Naive thymus-derived CD4-positive, alpha-beta T cell (primary cell): ENCODE measurements at regions of chr10 and their contacts with region 1.

Region 1: GRCh38 chr10:102615361-102615760 is 28.9 kb upstream of the TRIM8 start:
- DNase-seq: no peak
- ATAC-seq: no peak
- H3K4me3 ChIP-seq: no peak overlapping the region
- H3K4me3 Mint-ChIP-seq: no peak overlapping the region
- H3K27ac ChIP-seq: no peak overlapping the region
- H3K27ac Mint-ChIP-seq: peak overlapping the region in 6 of 9 donors; percentile 29 to 84 (median 53)
- H3K4me1 ChIP-seq: peaks cover 0 to 35% of the 10 kb centered on the region in 2 donors
- H3K4me1 Mint-ChIP-seq: peaks cover 7 to 36% (median 32%) of the 10 kb centered on the region in 7 donors
- H3K27me3 ChIP-seq: no peaks in the 10 kb centered on the region
- H3K27me3 Mint-ChIP-seq: no peaks in the 10 kb centered on the region

Region 2: DNA sequence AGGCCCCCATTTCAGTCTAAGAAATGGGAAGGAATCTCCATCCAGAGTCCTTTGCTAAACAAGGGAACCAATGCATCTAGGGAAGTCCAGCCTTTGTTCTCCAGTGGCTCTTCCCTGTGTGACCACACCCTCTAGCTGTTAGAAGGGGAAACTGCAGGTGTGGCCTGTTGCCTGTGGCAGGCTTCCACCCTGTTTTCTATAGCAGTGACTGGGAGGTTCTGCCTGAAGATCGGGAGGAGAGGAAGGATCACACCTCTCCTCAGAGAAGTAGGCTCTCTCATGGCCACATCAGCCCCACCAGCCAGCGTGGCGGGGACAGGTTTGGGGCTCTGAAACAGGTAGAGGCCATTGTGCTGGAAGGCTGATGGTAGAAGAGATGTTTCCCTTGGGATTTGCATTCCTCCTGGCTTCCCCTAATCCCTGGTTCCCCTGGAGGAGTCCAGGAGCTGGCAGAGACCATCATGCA is 18.8 kb before region 1 on chr10:
- CTCF ChIA-PET with region 1: interaction called, 3 read pairs
- POLR2A ChIA-PET with region 1: no interaction called
- intact Hi-C with region 1: loop called in 1 of 2 experiments (anchors 2 kb)
- DNase-seq: peak in 2 of 9 donors; percentile 20 to 29
- ATAC-seq: peak; percentile 63
- H3K4me3 ChIP-seq: no peak overlapping the region
- H3K4me3 Mint-ChIP-seq: no peak overlapping the region
- H3K27ac ChIP-seq: no peak overlapping the region
- H3K27ac Mint-ChIP-seq: peak overlapping the region in 2 of 9 donors; percentile 49 to 54
- H3K4me1 ChIP-seq: no peaks in the 10 kb centered on the region
- H3K4me1 Mint-ChIP-seq: peaks cover 0 to 5% (median 0%) of the 10 kb centered on the region in 7 donors
- H3K27me3 ChIP-seq: no peaks in the 10 kb centered on the region
- H3K27me3 Mint-ChIP-seq: no peaks in the 10 kb centered on the region